ENCODE measurements at regions of chr9 and their contacts with region 1.

Region 1: GRCh38 chr9:1604942-1605560 is 410.1 kb upstream of the SMARCA2 start:
- DNase-seq: peak; percentile 20
- H3K27ac ChIP-seq: no peak overlapping the region
- CTCF ChIP-seq: peak; percentile 69

Region 2: GRCh38 chr9:1025131-1025530 is 579.9 kb before region 1 on chr9:
- CTCF ChIA-PET with region 1: no interaction called
- POLR2A ChIA-PET with region 1: no interaction called
- DNase-seq: no peak
- H3K27ac ChIP-seq: no peak overlapping the region
- CTCF ChIP-seq: no peak

Region 3: DNA sequence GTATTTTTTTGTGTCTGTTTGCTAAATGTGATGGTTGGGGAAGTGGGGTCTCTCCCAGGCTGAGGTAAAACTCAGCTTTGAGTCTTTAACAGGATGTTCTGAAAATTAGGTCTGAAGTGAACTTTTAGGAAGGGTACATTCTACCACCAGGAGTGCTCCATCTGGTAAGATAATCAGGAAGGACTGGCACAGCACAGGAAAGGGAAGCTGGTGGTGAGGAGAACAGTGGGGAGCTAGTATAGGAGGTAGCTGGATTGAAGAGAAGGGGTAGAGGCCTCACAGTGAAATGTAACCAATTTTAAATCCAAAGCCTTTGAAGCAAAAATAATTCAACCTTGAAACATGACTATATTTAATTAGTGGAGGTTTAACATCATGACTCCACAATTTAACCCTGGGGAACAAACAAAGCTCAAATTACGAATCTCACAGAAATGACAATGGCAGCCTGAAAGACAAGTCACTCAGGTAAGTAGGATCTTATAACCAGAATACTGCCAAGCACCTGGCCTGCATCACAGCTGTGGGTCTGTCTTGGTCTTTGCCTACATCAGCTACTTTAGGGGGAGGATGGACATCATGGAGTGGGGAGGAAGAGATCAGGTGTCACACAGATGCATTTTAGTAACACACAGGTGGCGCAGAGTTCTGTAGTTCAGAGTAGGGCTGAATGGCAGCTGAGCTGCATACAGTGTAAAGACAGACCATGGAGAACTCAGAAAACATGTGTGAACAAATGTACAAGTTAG is 109.6 kb before region 1 on chr9:
- CTCF ChIA-PET with region 1: no interaction called
- POLR2A ChIA-PET with region 1: no interaction called
- DNase-seq: no peak
- H3K27ac ChIP-seq: no peak overlapping the region
- CTCF ChIP-seq: no peak

Region 4: GRCh38 chr9:1791191-1791590 is 186.1 kb after region 1 on chr9:
- CTCF ChIA-PET with region 1: interaction called, 11 read pairs
- POLR2A ChIA-PET with region 1: no interaction called
- DNase-seq: no peak
- H3K27ac ChIP-seq: no peak overlapping the region
- CTCF ChIP-seq: no peak

Measured in RWPE1 (cell line).